AG04449 (cell line): ENCODE measurements at regions of chr9 and their contacts with region 1.

Region 1: GRCh38 chr9:36407122-36407723 is 7.2 kb upstream of the RNF38 start:
- DNase-seq: no peak
- H3K4me3 ChIP-seq: no peak overlapping the region
- CTCF ChIP-seq: peak; percentile 73

Region 2: GRCh38 chr9:36423206-36423605 is 16.0 kb after region 1 on chr9:
- CTCF ChIA-PET with region 1: interaction called, 128 read pairs
- POLR2A ChIA-PET with region 1: no interaction called
- DNase-seq: no peak
- H3K4me3 ChIP-seq: no peak overlapping the region
- CTCF ChIP-seq: no peak

Region 3: GRCh38 chr9:36450110-36450732 is 43.0 kb after region 1 on chr9:
- CTCF ChIA-PET with region 1: interaction called, 182 read pairs
- POLR2A ChIA-PET with region 1: no interaction called
- DNase-seq: peak; percentile 9
- H3K4me3 ChIP-seq: no peak overlapping the region
- CTCF ChIP-seq: peak; percentile 44

Region 4: GRCh38 chr9:36470643-36471290 is 63.5 kb after region 1 on chr9:
- CTCF ChIA-PET with region 1: interaction called, 10 read pairs
- POLR2A ChIA-PET with region 1: no interaction called
- DNase-seq: no peak
- H3K4me3 ChIP-seq: peak overlapping the region; percentile 6
- CTCF ChIP-seq: no peak

Region 5: DNA sequence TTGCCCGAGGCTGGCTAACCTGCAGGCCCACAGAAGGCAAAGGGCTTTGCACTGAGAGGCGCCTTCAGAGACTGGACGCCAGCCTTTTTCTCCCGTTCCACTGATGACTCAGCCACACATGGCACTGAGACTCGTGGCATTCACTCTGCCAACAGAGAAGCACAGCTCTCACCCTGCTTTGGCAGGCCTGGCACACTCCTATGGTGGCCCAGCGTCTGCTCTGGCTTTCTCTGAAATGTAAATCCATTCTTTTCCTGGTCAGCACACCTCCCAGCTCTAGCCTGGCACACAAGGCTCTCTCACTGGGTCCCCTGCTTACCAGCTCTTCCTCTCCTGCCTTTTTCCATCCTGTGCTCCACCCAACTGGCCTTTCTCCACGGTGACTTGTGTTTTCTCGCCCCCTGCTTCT is 159.6 kb after region 1 on chr9:
- CTCF ChIA-PET with region 1: interaction called, 345 read pairs
- POLR2A ChIA-PET with region 1: no interaction called
- DNase-seq: no peak
- H3K4me3 ChIP-seq: no peak overlapping the region
- CTCF ChIP-seq: no peak

Region 6: GRCh38 chr9:36632892-36633291 is 225.7 kb after region 1 on chr9:
- CTCF ChIA-PET with region 1: interaction called, 16 read pairs
- POLR2A ChIA-PET with region 1: no interaction called
- DNase-seq: no peak
- H3K4me3 ChIP-seq: no peak overlapping the region
- CTCF ChIP-seq: peak; percentile 31